CD4-positive, alpha-beta memory T cell (primary cell): ENCODE measurements at regions of chr7 and their contacts with region 1.

Region 1: GRCh38 chr7:101217388-101218235 is at the starts of genes PLOD3 and ZNHIT1:
- DNase-seq: peak; percentile 93 to 98 (median 96)
- H3K4me3 ChIP-seq: peak within 1 kb of the TSS; percentile 83 to 86
- H3K4me3 Mint-ChIP-seq: peak within 1 kb of the TSS; percentile 90 to 98 (median 96)
- H3K27ac ChIP-seq: peak within 1 kb of the TSS; percentile 64
- H3K27ac Mint-ChIP-seq: peak within 1 kb of the TSS; percentile 91 to 97 (median 96)
- H3K4me1 ChIP-seq: peaks cover 32% of the 10 kb centered on the region
- H3K4me1 Mint-ChIP-seq: peaks cover 18 to 57% (median 34%) of the 10 kb centered on the region in 4 donors
- H3K27me3 ChIP-seq: no peaks in the 10 kb centered on the region
- H3K27me3 Mint-ChIP-seq: no peaks in the 10 kb centered on the region
- total RNA-seq, gene PLOD3: 64.0 to 72.4 TPM
- total RNA-seq, gene ZNHIT1: 44.6 to 46.0 TPM

Region 2: DNA sequence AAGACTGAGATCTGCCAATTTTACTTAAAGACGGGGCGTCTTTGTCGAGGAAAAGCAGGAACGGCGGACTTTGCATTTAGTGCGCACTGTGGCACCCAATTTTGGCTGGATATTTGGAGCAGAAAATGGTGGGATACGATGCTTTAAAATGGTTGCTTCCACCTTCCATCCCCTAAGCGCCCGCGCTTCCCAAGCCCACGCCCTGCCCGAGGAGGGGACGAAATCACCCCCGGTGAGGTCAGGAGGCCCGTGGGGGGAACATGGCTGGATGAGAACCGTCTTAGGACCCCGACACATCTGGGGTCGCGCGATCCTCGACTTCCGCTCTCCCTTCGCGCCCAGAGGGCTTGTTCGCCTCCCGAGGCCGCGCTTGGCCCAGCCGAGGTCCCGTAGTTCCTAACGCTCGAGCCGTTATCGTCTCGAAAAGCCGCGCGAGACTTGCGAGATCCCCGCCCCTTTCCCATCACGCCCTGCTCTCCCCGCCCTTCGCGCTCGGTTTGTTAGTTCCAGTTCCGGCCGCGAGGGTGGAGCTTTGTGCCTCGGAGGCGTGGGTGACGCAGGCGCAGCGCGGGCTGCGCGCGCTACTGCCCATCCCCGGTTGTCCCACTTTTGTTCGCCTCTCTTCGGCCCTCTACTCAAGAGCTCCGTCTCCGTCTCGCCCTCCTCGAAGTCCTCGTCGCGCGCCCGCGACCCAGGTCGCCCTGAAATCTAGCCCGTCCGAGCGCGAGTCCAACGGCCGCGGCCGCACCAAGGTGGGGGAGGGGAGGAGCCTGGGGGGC is 342.8 kb before region 1 on chr7 and contains the start of gene SRRT:
- CTCF ChIA-PET with region 1: interaction called, 3 read pairs
- POLR2A ChIA-PET with region 1: interaction called, 15 read pairs
- intact Hi-C with region 1: no loop called
- DNase-seq: peak; percentile 98
- H3K4me3 ChIP-seq: peak within 1 kb of the TSS; percentile 92 to 99
- H3K4me3 Mint-ChIP-seq: peak within 1 kb of the TSS; percentile 98 to 99 (median 99)
- H3K27ac ChIP-seq: peak within 1 kb of the TSS; percentile 91
- H3K27ac Mint-ChIP-seq: peak within 1 kb of the TSS; percentile 96 to 99 (median 98)
- H3K4me1 ChIP-seq: peaks cover 49% of the 10 kb centered on the region
- H3K4me1 Mint-ChIP-seq: peaks cover 26 to 61% (median 47%) of the 10 kb centered on the region in 4 donors
- H3K27me3 ChIP-seq: no peaks in the 10 kb centered on the region
- H3K27me3 Mint-ChIP-seq: no peaks in the 10 kb centered on the region
- total RNA-seq, gene SRRT: 264 to 272 TPM

Region 3: DNA sequence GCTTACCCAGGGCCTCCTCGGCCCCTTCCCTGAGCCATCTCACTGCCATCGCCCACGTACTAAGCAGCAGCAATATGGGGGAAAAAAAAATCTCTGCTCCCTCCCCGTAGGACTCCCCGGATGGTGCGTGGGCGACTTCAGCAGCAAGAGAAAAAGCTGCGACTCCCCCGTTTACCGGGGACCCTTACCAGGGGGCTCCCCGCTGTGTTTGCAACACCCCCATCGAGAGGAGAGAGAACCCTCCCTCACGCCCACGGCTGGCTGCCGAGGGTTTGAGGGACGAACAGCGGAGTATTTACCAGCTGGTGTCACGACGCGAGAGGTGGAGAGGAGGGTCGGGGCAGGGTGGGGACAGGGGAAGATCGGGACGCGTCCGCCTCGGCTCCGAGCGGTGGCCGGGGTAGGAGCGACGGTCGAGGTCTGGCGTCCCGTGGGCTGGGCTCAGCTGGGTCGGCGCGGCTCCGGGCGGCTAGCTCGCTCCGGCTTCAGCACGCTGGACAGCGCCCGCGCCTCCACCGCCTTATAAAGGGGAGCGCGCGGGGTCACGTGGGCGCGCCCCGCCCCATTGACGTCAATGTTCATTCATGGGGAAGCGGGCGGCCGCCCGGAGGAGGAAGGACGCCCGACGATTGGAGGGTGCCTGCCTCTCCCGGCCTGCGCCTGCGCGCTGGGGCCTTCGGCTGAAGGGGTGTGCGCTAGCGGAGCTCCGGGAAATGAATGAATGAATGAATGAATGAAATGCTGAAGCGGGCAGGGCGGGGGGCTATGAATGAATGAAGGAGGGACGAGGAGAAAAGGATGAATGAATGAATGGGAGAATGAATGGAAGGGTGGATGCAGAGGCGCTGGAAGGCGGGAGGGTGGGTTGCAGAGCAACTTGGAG is 52.3 kb before region 1 on chr7 and contains the start of gene VGF:
- CTCF ChIA-PET with region 1: no interaction called
- POLR2A ChIA-PET with region 1: interaction called, 3 read pairs
- intact Hi-C with region 1: loop called (anchors 10 kb)
- DNase-seq: peak; percentile 89 to 92 (median 90)
- H3K4me3 ChIP-seq: peak within 1 kb of the TSS in 1 of 2 donors; percentile 23
- H3K4me3 Mint-ChIP-seq: peak within 1 kb of the TSS; percentile 63 to 87 (median 78)
- H3K27ac ChIP-seq: no peak within 1 kb of the TSS
- H3K27ac Mint-ChIP-seq: peak within 1 kb of the TSS; percentile 74 to 93 (median 88)
- H3K4me1 ChIP-seq: peaks cover 53% of the 10 kb centered on the region
- H3K4me1 Mint-ChIP-seq: peaks cover 20 to 48% (median 35%) of the 10 kb centered on the region in 4 donors
- H3K27me3 ChIP-seq: peaks cover 62% of the 10 kb centered on the region
- H3K27me3 Mint-ChIP-seq: peaks cover 46 to 47% of the 10 kb centered on the region in 2 donors
- total RNA-seq, gene VGF: not detected

Region 4: GRCh38 chr7:101201695-101202604 is 15.7 kb before region 1 on chr7:
- CTCF ChIA-PET with region 1: interaction called, 4 read pairs
- POLR2A ChIA-PET with region 1: interaction called, 18 read pairs
- intact Hi-C with region 1: no loop called
- DNase-seq: no peak
- H3K4me3 ChIP-seq: no peak overlapping the region
- H3K4me3 Mint-ChIP-seq: peak overlapping the region in 5 of 8 donors; percentile 15 to 52 (median 44)
- H3K27ac ChIP-seq: no peak overlapping the region
- H3K27ac Mint-ChIP-seq: no peak overlapping the region
- H3K4me1 ChIP-seq: peaks cover 13% of the 10 kb centered on the region
- H3K4me1 Mint-ChIP-seq: peaks cover 7 to 25% (median 13%) of the 10 kb centered on the region in 4 donors
- H3K27me3 ChIP-seq: no peaks in the 10 kb centered on the region
- H3K27me3 Mint-ChIP-seq: peaks cover 11 to 15% of the 10 kb centered on the region in 2 donors

Region 5: GRCh38 chr7:101244375-101245146 is 26.9 kb after region 1 on chr7 and contains the start of gene FIS1:
- CTCF ChIA-PET with region 1: interaction called, 105 read pairs
- POLR2A ChIA-PET with region 1: interaction called, 102 read pairs
- intact Hi-C with region 1: loop called (anchors 1 kb)
- DNase-seq: peak; percentile 91 to 96 (median 93)
- H3K4me3 ChIP-seq: peak within 1 kb of the TSS; percentile 95 to 100
- H3K4me3 Mint-ChIP-seq: peak within 1 kb of the TSS; percentile 93 to 99 (median 97)
- H3K27ac ChIP-seq: peak within 1 kb of the TSS; percentile 85
- H3K27ac Mint-ChIP-seq: peak within 1 kb of the TSS; percentile 93 to 99 (median 97)
- H3K4me1 ChIP-seq: peaks cover 24% of the 10 kb centered on the region
- H3K4me1 Mint-ChIP-seq: peaks cover 14 to 50% (median 24%) of the 10 kb centered on the region in 4 donors
- H3K27me3 ChIP-seq: no peaks in the 10 kb centered on the region
- H3K27me3 Mint-ChIP-seq: no peaks in the 10 kb centered on the region
- total RNA-seq, gene FIS1: 100 to 104 TPM

Region 6: GRCh38 chr7:101251871-101252659 is 34.5 kb after region 1 on chr7:
- CTCF ChIA-PET with region 1: interaction called, 12 read pairs
- POLR2A ChIA-PET with region 1: interaction called, 28 read pairs
- intact Hi-C with region 1: loop called (anchors 1 kb)
- DNase-seq: peak; percentile 97 to 99 (median 98)
- H3K4me3 ChIP-seq: peak overlapping the region; percentile 97 to 98
- H3K4me3 Mint-ChIP-seq: peak overlapping the region; percentile 99 to 100 (median 99)
- H3K27ac ChIP-seq: peak overlapping the region; percentile 83
- H3K27ac Mint-ChIP-seq: peak overlapping the region; percentile 93 to 99 (median 98)
- H3K4me1 ChIP-seq: peaks cover 18% of the 10 kb centered on the region
- H3K4me1 Mint-ChIP-seq: peaks cover 18 to 39% (median 27%) of the 10 kb centered on the region in 4 donors
- H3K27me3 ChIP-seq: no peaks in the 10 kb centered on the region
- H3K27me3 Mint-ChIP-seq: peaks cover 1 to 4% of the 10 kb centered on the region in 2 donors

Region 7: DNA sequence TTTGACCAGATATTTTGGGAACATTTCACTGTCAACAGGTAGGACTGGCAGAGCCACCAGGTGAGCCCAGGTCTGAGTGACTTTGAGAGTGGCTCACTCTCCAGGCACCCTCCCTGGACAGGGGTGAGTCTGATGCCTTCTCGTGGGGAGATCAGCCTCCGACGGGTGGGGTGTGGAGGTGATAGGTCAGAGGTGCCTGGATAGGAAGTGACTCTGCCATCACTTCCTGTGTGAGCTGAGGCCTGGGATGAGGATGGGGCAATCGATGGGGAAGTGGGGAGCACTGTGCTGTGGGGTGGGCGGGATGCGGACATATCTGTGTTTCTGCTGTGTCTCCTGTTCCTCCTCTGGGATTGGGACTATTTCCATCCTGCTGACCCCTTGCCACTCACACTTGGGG is 69.4 kb after region 1 on chr7:
- CTCF ChIA-PET with region 1: interaction called, 4 read pairs
- POLR2A ChIA-PET with region 1: interaction called, 6 read pairs
- intact Hi-C with region 1: loop called (anchors 1 kb)
- DNase-seq: no peak
- H3K4me3 ChIP-seq: no peak overlapping the region
- H3K4me3 Mint-ChIP-seq: no peak overlapping the region
- H3K27ac ChIP-seq: no peak overlapping the region
- H3K27ac Mint-ChIP-seq: peak overlapping the region in 1 of 7 donors; percentile 83
- H3K4me1 ChIP-seq: peaks cover 9% of the 10 kb centered on the region
- H3K4me1 Mint-ChIP-seq: peaks cover 8 to 25% (median 19%) of the 10 kb centered on the region in 4 donors
- H3K27me3 ChIP-seq: no peaks in the 10 kb centered on the region
- H3K27me3 Mint-ChIP-seq: peaks cover 6 to 9% of the 10 kb centered on the region in 2 donors